Heart left ventricle (tissue), 16 donors: ENCODE measurements at regions of chr16 and their contacts with region 1.

Region 1: DNA sequence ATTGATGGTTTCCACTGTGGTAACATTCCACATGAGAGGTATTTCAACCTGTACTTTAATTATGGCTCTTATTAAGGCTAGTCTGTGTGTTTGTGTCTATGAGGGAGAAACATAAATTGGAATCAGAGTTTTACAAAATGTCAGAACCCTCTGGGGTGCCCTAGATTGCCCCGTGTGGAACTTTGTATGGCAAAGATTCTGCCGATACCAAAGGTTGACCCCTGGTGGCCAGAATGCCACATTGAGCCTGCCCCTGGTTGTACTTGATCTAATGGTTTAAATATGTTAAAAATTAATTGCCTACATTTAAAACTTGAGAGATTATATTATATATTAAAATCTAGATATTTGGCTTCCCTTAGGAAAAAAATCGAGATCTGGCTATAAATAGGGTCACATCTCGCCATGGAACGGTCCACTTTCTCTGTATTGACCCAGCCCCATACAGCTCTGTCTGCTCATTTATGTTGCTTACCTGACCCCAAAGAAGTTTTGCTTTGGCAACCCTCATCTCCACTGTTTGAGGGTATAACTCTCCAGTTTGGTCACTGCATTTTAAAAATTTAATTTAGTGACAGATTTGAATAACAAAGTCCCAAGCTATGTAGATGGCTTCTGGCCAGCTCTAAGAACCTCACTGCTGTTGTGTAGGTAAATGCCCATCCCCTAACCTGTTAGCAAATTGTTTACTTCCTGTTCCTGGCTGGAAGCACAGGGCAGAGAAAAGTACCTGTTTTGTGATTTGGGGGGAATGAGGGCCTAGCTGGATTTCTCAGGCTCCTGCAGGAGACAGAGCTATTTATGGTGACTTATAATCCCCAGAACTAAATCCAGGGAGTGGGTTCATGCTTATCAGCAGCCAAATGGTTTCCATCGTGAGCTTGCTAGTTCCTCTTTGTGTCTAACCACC is 95.0 kb downstream of the PLCG2 start:
- DNase-seq: peak in 4 of 5 donors; percentile 37 to 50 (median 44)
- ATAC-seq: peak in 3 of 4 donors; percentile 58 to 81 (median 67)
- H3K4me3 ChIP-seq: no peak overlapping the region
- H3K27ac ChIP-seq: peak overlapping the region in 1 of 12 donors; percentile 5
- H3K4me1 ChIP-seq: peaks cover 0 to 16% (median 0%) of the 10 kb centered on the region in 12 donors
- H3K27me3 ChIP-seq: peaks cover 0 to 4% (median 0%) of the 10 kb centered on the region in 9 donors
- CTCF ChIP-seq: peak; percentile 52 to 87 (median 76)
- POLR2A ChIP-seq: no peak

Region 2: GRCh38 chr16:81366316-81366932 is 507.7 kb before region 1 on chr16:
- intact Hi-C with region 1: loop called in 3 of 10 experiments (anchors 10 kb)
- DNase-seq: no peak
- ATAC-seq: peak in 3 of 4 donors; percentile 60 to 74 (median 61)
- H3K4me3 ChIP-seq: no peak overlapping the region
- H3K27ac ChIP-seq: no peak overlapping the region
- H3K4me1 ChIP-seq: peaks cover 0 to 25% (median 6%) of the 10 kb centered on the region in 12 donors
- H3K27me3 ChIP-seq: no peaks in the 10 kb centered on the region
- CTCF ChIP-seq: peak; percentile 49 to 76 (median 62)
- POLR2A ChIP-seq: no peak

Region 3: GRCh38 chr16:81752225-81752875 is 121.7 kb before region 1 on chr16:
- intact Hi-C with region 1: loop called in 1 of 10 experiments (anchors 10 kb)
- DNase-seq: peak; percentile 57 to 84 (median 71)
- ATAC-seq: peak; percentile 73 to 91 (median 80)
- H3K4me3 ChIP-seq: no peak overlapping the region
- H3K27ac ChIP-seq: peak overlapping the region in 10 of 12 donors; percentile 50 to 88 (median 62)
- H3K4me1 ChIP-seq: peaks cover 0 to 53% (median 9%) of the 10 kb centered on the region in 12 donors
- H3K27me3 ChIP-seq: no peaks in the 10 kb centered on the region
- CTCF ChIP-seq: no peak
- POLR2A ChIP-seq: peak in 1 of 2 donors; percentile 17

Region 4: DNA sequence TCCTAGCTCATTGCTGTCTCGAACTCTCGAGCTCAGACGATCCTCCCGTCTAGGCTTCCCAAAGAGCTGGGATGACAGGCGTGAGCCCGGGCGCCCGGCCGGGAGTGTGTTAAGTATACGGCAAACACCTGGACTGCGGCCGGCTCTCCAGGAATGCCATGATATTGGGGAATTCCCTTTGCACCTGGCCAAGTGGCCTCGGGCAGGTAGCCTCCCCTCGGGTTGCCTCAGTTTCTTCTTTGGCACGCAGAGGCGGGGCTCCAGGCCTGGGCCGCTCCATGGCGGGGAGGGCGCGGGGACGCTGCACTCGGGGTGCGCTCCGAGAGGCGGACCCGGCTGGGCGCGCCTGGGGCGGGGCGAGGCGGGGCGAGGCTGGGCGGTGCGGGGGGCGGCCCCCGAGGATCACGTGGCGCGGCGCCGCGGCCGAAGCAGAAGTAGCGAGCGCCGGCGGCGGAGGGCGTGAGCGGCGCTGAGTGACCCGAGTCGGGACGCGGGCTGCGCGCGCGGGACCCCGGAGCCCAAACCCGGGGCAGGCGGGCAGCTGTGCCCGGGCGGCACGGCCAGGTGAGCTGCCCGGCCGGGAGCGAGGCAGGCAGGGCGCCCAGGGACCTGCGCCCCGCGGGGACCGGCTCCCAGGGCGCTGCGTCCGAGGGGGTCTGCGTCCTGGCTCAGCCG is 95.1 kb before region 1 on chr16 and contains the start of gene PLCG2:
- intact Hi-C with region 1: loop called in 3 of 10 experiments (anchors 10 kb)
- DNase-seq: peak; percentile 69 to 89 (median 80)
- ATAC-seq: peak; percentile 63 to 94 (median 91)
- H3K4me3 ChIP-seq: peak within 1 kb of the TSS; percentile 32 to 82 (median 70)
- H3K27ac ChIP-seq: peak within 1 kb of the TSS in 9 of 12 donors; percentile 33 to 84 (median 62)
- H3K4me1 ChIP-seq: peaks cover 0 to 35% (median 9%) of the 10 kb centered on the region in 12 donors
- H3K27me3 ChIP-seq: peaks cover 0 to 14% (median 2%) of the 10 kb centered on the region in 9 donors
- CTCF ChIP-seq: no peak
- POLR2A ChIP-seq: peak in 1 of 2 donors; percentile 58
- total RNA-seq, gene PLCG2: 3.7 to 35.4 (median 6.0) TPM

Region 5: DNA sequence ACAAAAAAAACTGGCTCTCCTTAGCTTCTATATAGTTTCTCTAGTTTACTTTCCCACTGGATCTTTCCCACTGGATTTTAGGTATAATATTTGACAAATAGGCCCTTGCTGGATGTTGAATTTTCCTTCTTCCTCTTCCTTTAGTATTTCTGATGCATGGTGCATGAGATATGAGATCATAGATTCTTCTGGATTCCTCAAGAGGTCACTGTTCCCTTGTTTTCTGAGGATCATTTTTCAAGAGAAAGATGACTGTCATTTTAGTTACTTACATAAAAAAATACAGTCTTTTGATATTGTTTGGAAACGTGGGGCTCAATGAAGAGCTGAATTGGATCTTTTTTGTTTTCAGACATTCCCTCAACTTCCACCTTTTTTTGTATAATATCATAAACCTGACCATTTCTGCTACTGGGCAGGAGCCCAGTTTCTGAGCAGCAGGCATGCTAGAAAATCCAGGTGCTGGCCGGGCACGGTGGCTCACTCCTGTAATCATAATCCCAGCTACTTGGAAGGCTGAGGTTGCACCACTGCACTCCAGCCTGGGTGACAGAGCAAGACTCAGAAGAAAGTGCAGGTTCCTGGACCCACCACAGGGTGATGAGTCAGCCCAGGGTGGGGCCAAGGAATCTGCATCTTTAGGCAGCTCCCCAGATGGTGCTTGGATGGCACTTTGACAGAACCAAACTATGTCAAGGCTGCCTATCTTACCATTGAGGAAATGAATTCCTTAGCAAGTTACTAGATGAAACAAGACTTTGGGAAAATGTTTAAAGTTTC is 66.9 kb after region 1 on chr16:
- intact Hi-C with region 1: no loop called
- DNase-seq: no peak
- ATAC-seq: peak in 1 of 4 donors; percentile 29
- H3K4me3 ChIP-seq: no peak overlapping the region
- H3K27ac ChIP-seq: no peak overlapping the region
- H3K4me1 ChIP-seq: peaks cover 0 to 5% (median 0%) of the 10 kb centered on the region in 12 donors
- H3K27me3 ChIP-seq: peaks cover 0 to 7% (median 0%) of the 10 kb centered on the region in 9 donors
- CTCF ChIP-seq: peak; percentile 31 to 60 (median 46)
- POLR2A ChIP-seq: no peak